ENCODE measurements at regions of chr19 and their contacts with region 1.

Region 1: GRCh38 chr19:41263850-41264580 is at the start of gene HNRNPUL1:
- DNase-seq: peak; percentile 99
- ATAC-seq: peak; percentile 68
- H3K4me3 ChIP-seq: peak within 1 kb of the TSS; percentile 97
- H3K27ac ChIP-seq: peak within 1 kb of the TSS; percentile 95
- H3K4me1 ChIP-seq: peaks cover 16% of the 10 kb centered on the region
- H3K27me3 ChIP-seq: no peaks in the 10 kb centered on the region
- CTCF ChIP-seq: peak; percentile 31; the same call in 1 of the 2 replicates
- total RNA-seq, gene HNRNPUL1: 158 and 198 TPM in 2 replicates

Region 2: DNA sequence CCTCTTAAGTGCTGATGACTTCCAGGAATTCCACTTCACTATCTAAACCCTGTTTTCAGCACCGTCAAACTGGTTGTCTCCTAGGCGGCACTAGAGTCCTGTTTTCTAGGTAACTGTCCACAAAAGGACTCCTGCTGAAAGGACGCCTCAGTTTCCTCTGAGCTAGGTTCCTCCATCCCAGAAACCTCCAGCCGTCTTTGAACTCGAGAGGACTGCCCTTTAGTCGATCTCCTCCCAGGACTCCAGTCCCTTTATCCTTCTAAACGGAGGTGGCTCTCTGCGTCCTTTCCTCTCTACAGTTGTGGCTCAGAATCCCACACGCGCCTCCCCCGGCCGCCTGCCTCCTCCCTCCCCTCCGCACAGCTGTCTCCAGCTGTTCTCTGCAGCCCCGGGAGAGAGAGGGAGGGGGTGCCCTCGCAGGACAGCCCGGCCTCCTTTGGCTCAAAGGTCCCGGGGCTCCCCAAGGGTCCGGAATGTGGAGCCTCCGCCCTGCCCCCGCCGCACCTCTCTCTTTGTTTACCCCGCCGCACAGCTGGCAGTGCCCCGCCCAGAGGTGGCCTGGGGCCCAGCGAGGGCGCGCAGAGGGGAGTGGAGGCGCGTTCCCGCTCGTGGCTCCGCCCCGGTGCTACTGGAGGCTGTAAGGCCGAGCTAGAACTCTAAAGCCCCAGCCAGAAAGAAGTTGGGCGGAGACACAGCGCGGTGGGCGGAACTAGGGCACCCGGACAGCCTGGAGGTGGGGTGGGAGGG is 660.5 kb before region 1 on chr19:
- CTCF ChIA-PET with region 1: no interaction called
- POLR2A ChIA-PET with region 1: interaction called, 22 read pairs
- intact Hi-C with region 1: no loop called
- DNase-seq: peak; percentile 97
- ATAC-seq: peak; percentile 66
- H3K4me3 ChIP-seq: peak overlapping the region; percentile 68
- H3K27ac ChIP-seq: no peak overlapping the region
- H3K4me1 ChIP-seq: peaks cover 36% of the 10 kb centered on the region
- H3K27me3 ChIP-seq: no peaks in the 10 kb centered on the region
- CTCF ChIP-seq: no peak

Region 3: GRCh38 chr19:41206926-41207750 is 56.9 kb before region 1 on chr19:
- CTCF ChIA-PET with region 1: interaction called, 23 read pairs
- POLR2A ChIA-PET with region 1: no interaction called
- intact Hi-C with region 1: loop called (anchors 1 kb)
- DNase-seq: no peak
- ATAC-seq: no peak
- H3K4me3 ChIP-seq: no peak overlapping the region
- H3K27ac ChIP-seq: no peak overlapping the region
- H3K4me1 ChIP-seq: no peaks in the 10 kb centered on the region
- H3K27me3 ChIP-seq: no peaks in the 10 kb centered on the region
- CTCF ChIP-seq: no peak

Region 4: DNA sequence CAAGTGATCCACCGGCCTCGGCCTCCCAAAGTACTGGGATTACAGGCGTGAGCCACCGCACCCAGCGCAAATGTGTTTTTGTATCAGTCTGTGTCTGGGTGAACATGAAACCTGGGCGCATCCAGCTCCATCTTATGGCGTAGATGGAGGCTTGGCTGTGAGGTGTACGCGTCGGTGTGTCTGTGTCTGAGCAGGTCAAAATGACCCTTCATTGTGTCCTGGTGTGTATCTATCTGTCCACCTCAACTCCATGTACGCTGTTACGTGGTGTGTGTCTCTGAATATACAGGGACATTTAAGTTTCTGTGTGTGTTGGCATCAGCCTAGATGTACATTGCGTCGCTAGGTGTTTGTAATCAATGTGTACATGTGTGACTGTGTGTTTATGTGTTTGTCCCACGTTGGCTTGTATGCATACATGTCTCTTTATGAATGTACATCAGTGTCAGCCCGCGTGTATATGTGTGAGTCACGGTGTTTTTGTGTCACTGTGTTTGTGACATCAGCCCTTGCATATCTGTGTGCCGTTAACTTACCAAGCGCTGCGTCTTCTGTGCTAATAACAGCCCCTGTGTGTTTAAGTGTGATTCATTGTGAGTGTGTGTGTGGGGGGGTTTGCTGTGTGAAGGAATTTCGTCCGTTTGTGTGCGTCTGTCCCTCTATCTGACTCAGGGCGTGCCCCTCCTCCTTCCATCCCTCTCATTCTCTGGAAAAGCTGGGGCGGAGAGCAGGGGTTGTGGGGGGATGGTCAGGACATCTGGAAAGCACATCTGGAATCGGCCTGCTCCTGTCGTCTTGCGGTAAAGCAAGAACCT is 38.6 kb before region 1 on chr19:
- CTCF ChIA-PET with region 1: interaction called, 5 read pairs
- POLR2A ChIA-PET with region 1: interaction called, 3 read pairs
- intact Hi-C with region 1: loop called (anchors 2 kb)
- DNase-seq: peak; percentile 94
- ATAC-seq: peak; percentile 61
- H3K4me3 ChIP-seq: peak overlapping the region; percentile 59
- H3K27ac ChIP-seq: peak overlapping the region; percentile 97
- H3K4me1 ChIP-seq: peaks cover 57% of the 10 kb centered on the region
- H3K27me3 ChIP-seq: no peaks in the 10 kb centered on the region
- CTCF ChIP-seq: no peak

Region 5: DNA sequence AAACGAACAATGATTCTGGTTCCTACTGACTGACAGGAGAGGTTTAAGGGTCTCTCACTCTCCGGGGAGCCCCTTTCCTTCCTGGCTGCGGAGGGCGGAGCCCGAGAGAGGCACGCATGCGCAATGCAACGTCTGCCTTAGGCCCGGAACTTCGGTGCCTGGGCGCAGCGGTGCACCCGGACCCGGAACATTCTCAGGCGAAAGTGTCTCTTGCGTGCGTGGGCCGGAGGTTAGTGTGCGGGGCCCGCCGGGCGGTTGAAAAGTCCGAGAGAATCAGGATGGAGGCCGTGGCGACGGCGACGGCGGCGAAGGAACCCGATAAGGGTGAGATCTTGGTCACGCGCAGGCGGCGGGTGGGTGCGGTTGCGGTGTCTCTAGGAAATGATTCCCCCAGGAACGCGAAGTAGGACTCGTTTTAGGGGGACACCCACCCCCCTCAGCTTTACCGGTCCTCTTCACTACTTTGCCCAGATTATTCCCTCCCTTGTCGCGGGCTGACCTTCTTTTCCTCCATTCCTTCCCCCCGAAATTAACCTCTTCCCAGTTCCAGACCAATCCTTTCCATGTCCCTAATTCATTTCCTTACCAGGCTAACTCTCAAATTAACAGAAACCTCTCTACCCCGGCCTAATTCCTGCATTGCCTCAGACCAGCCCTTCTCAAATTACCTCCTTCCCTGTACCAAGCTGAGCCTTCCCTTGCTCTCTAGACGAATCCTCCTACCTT is 46.2 kb after region 1 on chr19 and contains the start of gene CCDC97:
- CTCF ChIA-PET with region 1: no interaction called
- POLR2A ChIA-PET with region 1: no interaction called
- intact Hi-C with region 1: loop called (anchors 2 kb)
- DNase-seq: peak; percentile 78
- ATAC-seq: peak; percentile 59
- H3K4me3 ChIP-seq: peak within 1 kb of the TSS; percentile 76
- H3K27ac ChIP-seq: peak within 1 kb of the TSS; percentile 86
- H3K4me1 ChIP-seq: peaks cover 10% of the 10 kb centered on the region; the same call in 1 of the 2 replicates
- H3K27me3 ChIP-seq: no peaks in the 10 kb centered on the region
- CTCF ChIP-seq: no peak
- total RNA-seq, gene CCDC97: 18.3 and 18.4 TPM in 2 replicates

Measured in PC-3 (cell line).